Calu3 (cell line): ENCODE measurements at regions of chr10 and their contacts with region 1.

Region 1: DNA sequence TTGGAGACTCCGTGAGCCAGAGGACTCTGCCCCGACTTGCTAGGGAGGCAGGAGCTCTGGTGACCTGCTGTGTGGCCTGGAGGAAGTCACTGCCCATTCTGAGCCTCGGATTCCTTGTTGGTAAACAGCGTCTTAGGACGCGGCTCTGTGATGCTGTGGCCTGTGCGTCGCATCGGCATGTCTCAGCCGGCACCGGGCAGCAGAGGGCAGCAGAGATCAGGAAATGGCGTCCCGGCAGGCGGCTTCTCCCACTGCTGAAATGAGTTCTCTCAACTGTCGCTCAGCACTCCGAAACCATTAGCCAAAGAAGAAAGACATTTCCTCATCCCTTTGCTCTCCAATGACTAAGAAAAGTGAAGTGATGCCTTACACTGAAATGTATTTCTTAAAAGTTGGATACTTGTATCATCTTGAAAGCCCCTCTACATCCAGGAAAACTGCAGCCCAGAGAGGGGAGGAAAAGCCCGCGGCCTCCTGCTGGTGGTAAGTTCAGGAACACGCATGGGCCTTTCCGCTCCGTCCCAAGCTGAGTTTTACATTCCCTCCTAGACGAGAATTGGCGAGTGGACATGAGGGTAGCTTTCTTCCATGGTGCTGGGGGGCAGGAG is 91.7 kb downstream of the WDR11 start:
- DNase-seq: peak; percentile 82
- H3K4me3 Mint-ChIP-seq: no peak overlapping the region
- H3K27ac Mint-ChIP-seq: no peak overlapping the region
- H3K4me1 Mint-ChIP-seq: peaks cover 20% of the 10 kb centered on the region
- H3K27me3 Mint-ChIP-seq: no peaks in the 10 kb centered on the region
- CTCF ChIP-seq: peak; percentile 69

Region 2: DNA sequence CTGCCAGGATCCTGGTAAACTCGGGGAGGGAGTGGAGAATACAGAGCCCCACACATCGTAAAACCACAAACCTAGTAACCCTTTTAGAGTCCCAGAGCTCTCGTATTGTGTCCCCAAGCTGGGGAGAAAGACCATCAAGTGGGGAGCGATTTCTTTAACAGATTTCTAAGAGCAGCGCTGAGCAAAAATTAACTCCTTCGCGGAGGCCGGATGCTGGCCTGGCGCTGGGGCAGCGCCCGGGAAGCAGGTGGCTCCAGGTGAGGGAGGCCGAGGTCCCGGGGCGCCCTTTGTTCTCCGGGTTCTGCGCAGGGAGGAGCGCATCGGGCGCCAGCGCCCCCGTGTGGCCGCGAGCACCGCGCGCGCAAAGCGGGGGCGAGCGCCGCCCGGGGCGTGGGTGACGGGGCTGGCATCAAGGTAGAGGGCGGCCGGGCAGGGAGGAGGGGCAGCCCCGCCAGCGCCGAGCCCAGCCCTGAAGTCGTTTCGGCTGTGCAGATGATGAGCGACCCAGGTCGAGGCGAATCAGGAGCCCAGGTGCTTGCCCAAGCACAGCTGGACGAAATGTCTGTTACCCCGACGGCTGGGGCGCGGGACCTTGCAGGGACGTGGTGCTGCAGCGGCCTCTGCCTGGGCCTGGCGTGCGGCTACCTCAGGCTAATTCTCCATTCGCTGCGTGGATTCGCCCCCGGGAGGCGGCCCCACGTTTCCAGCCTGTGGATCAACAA is 665.7 kb after region 1 on chr10:
- CTCF ChIA-PET with region 1: no interaction called
- intact Hi-C with region 1: loop called (anchors 5 kb)
- DNase-seq: peak; percentile 76
- H3K4me3 Mint-ChIP-seq: peak overlapping the region; percentile 40
- H3K27ac Mint-ChIP-seq: no peak overlapping the region
- H3K4me1 Mint-ChIP-seq: peaks cover 12% of the 10 kb centered on the region
- H3K27me3 Mint-ChIP-seq: no peaks in the 10 kb centered on the region
- CTCF ChIP-seq: peak; percentile 83

Region 3: DNA sequence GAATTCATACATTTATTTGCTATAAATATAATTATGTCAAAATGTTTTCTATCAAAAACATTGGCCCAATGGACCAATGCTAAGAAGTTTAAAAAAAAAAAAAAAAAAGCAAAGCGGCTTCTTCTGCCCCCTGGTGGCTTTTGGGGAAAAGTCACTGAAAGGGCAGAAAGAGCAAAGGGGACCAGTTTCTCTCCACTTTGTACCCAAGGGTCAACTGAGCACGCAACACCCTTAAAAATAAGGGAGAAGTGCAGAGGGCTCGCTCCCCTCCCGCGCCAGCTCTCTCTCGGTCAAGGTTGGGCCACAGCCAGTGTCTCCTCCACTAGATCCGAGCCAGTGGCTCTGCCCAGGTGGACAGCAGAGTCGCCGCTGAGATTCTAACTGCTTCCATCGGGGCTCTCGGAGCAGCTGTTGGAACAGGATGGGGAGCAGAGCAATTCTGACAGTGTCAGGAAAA is 791.7 kb after region 1 on chr10:
- CTCF ChIA-PET with region 1: no interaction called
- intact Hi-C with region 1: loop called (anchors 2 kb)
- DNase-seq: no peak
- H3K4me3 Mint-ChIP-seq: no peak overlapping the region
- H3K27ac Mint-ChIP-seq: no peak overlapping the region
- H3K4me1 Mint-ChIP-seq: no peaks in the 10 kb centered on the region
- H3K27me3 Mint-ChIP-seq: no peaks in the 10 kb centered on the region
- CTCF ChIP-seq: peak; percentile 39

Region 4: GRCh38 chr10:121886997-121887622 is 944.2 kb after region 1 on chr10:
- CTCF ChIA-PET with region 1: no interaction called
- intact Hi-C with region 1: loop called (anchors 1 kb)
- DNase-seq: peak; percentile 58
- H3K4me3 Mint-ChIP-seq: no peak overlapping the region
- H3K27ac Mint-ChIP-seq: no peak overlapping the region
- H3K4me1 Mint-ChIP-seq: peaks cover 8% of the 10 kb centered on the region
- H3K27me3 Mint-ChIP-seq: no peaks in the 10 kb centered on the region
- CTCF ChIP-seq: peak; percentile 56

Region 5: GRCh38 chr10:121900443-121901174 is 957.7 kb after region 1 on chr10:
- CTCF ChIA-PET with region 1: no interaction called
- intact Hi-C with region 1: loop called (anchors 5 kb)
- DNase-seq: peak; percentile 10
- H3K4me3 Mint-ChIP-seq: no peak overlapping the region
- H3K27ac Mint-ChIP-seq: no peak overlapping the region
- H3K4me1 Mint-ChIP-seq: no peaks in the 10 kb centered on the region
- H3K27me3 Mint-ChIP-seq: no peaks in the 10 kb centered on the region
- CTCF ChIP-seq: peak; percentile 25